Endothelial cell of umbilical vein (primary cell): ENCODE measurements at regions of chrX and their contacts with region 1.

Region 1: GRCh38 chrX:41084044-41084892 is 977 bp upstream of the USP9X start:
- DNase-seq: peak; percentile 97
- H3K4me3 ChIP-seq: peak overlapping the region in 2 of 3 experiments; percentile 67 to 70
- H3K27ac ChIP-seq: peak overlapping the region; percentile 100
- H3K4me1 ChIP-seq: peaks cover 16% of the 10 kb centered on the region
- H3K27me3 ChIP-seq: no peaks in the 10 kb centered on the region
- CTCF ChIP-seq: no peak
- POLR2A ChIP-seq: peak; percentile 78

Region 2: GRCh38 chrX:40735325-40736169 is 348.7 kb before region 1 on chrX and contains the start of gene MED14:
- CTCF ChIA-PET with region 1: no interaction called
- POLR2A ChIA-PET with region 1: no interaction called
- dilution Hi-C with region 1: no loop called
- intact Hi-C with region 1: loop called (anchors 1 kb)
- DNase-seq: peak; percentile 89
- H3K4me3 ChIP-seq: peak within 1 kb of the TSS; percentile 78 to 95 (median 84)
- H3K27ac ChIP-seq: peak within 1 kb of the TSS; percentile 93
- H3K4me1 ChIP-seq: peaks cover 20% of the 10 kb centered on the region
- H3K27me3 ChIP-seq: no peaks in the 10 kb centered on the region
- CTCF ChIP-seq: peak; percentile 39 to 56
- POLR2A ChIP-seq: peak; percentile 70
- total RNA-seq, gene MED14: 55.8 and 56.4 TPM in 2 replicates

Region 3: GRCh38 chrX:41010188-41010846 is 74.0 kb before region 1 on chrX:
- CTCF ChIA-PET with region 1: interaction called, 8 read pairs
- POLR2A ChIA-PET with region 1: interaction called, 4 read pairs
- dilution Hi-C with region 1: no loop called
- intact Hi-C with region 1: loop called (anchors 1 kb)
- DNase-seq: peak; percentile 91
- H3K4me3 ChIP-seq: no peak overlapping the region
- H3K27ac ChIP-seq: peak overlapping the region; percentile 81
- H3K4me1 ChIP-seq: peaks cover 20% of the 10 kb centered on the region
- H3K27me3 ChIP-seq: no peaks in the 10 kb centered on the region
- CTCF ChIP-seq: peak in 1 of 2 donors; percentile 44
- POLR2A ChIP-seq: peak; percentile 40

Region 4: DNA sequence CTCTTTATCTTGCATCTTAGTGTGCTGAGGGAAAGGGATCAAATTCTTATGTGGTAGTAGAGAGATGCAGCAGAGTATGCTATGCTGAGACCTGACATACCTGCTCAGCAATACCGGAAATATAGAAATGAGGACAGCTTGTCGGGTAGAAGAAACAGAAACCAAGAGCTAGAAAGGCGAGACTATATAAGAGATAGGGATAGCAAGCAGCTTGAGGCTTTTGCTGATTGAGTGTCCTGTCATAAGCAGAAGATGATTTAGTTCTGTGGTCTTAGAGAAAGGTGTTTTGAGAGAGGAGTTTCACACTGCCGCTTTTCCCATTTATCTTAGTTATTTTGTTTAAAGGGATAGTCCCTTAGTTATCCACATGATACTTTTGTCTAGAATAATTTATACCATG is 32.7 kb after region 1 on chrX:
- CTCF ChIA-PET with region 1: interaction called, 19 read pairs
- POLR2A ChIA-PET with region 1: interaction called, 3 read pairs
- dilution Hi-C with region 1: no loop called
- intact Hi-C with region 1: no loop called
- DNase-seq: no peak
- H3K4me3 ChIP-seq: no peak overlapping the region
- H3K27ac ChIP-seq: no peak overlapping the region
- H3K4me1 ChIP-seq: peaks cover 4% of the 10 kb centered on the region
- H3K27me3 ChIP-seq: no peaks in the 10 kb centered on the region
- CTCF ChIP-seq: no peak
- POLR2A ChIP-seq: no peak

Region 5: DNA sequence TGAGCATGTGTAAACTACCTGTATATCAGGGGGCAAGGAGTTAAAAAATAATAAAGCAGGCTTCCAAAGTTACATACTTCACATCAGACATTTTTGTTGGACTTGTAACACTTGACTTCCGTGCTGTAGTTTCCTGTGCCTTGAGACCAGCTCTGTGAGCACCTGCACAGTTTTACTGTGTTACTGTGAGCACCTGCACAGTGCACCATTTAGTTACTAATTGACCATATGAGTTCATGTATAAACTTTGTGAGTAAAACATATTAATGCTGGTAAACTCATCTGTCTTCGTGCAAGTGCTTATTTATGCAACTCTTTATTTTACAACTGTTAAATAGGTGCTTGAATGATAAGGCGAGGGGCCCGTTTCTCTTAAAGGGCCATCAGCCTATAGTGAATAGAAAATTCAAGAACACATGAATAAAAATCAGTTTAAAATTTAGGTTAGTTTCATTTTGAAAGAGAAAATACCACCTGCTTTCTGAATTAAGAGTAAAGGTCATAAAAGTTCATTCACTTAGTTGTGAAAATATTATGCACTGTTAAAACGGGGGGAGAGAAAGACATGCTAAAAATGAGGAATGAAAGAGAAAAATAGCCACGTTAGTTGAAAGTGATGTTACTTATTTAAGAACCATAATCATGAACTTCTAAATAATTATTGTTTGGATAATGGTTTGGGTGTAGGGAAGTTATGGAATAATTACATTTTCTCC is 43.4 kb after region 1 on chrX:
- CTCF ChIA-PET with region 1: no interaction called
- POLR2A ChIA-PET with region 1: no interaction called
- dilution Hi-C with region 1: no loop called
- intact Hi-C with region 1: no loop called
- DNase-seq: no peak
- H3K4me3 ChIP-seq: no peak overlapping the region
- H3K27ac ChIP-seq: no peak overlapping the region
- H3K4me1 ChIP-seq: no peaks in the 10 kb centered on the region
- H3K27me3 ChIP-seq: no peaks in the 10 kb centered on the region
- CTCF ChIP-seq: no peak
- POLR2A ChIP-seq: no peak

Region 6: GRCh38 chrX:41148553-41148952 is 64.3 kb after region 1 on chrX:
- CTCF ChIA-PET with region 1: no interaction called
- POLR2A ChIA-PET with region 1: interaction called, 5 read pairs
- dilution Hi-C with region 1: no loop called
- intact Hi-C with region 1: loop called (anchors 1 kb)
- DNase-seq: peak; percentile 62
- H3K4me3 ChIP-seq: no peak overlapping the region
- H3K27ac ChIP-seq: peak overlapping the region; percentile 80
- H3K4me1 ChIP-seq: peaks cover 37% of the 10 kb centered on the region
- H3K27me3 ChIP-seq: no peaks in the 10 kb centered on the region
- CTCF ChIP-seq: no peak
- POLR2A ChIP-seq: no peak

Region 7: GRCh38 chrX:41759817-41760216 is 675.5 kb after region 1 on chrX:
- CTCF ChIA-PET with region 1: no interaction called
- POLR2A ChIA-PET with region 1: no interaction called
- dilution Hi-C with region 1: no loop called
- intact Hi-C with region 1: no loop called
- DNase-seq: peak; percentile 45
- H3K4me3 ChIP-seq: no peak overlapping the region
- H3K27ac ChIP-seq: no peak overlapping the region
- H3K4me1 ChIP-seq: peaks cover 2% of the 10 kb centered on the region
- H3K27me3 ChIP-seq: no peaks in the 10 kb centered on the region
- CTCF ChIP-seq: peak; percentile 18 to 24
- POLR2A ChIP-seq: no peak